ENCODE measurements at regions of chr2 and their contacts with region 1.

Region 1: DNA sequence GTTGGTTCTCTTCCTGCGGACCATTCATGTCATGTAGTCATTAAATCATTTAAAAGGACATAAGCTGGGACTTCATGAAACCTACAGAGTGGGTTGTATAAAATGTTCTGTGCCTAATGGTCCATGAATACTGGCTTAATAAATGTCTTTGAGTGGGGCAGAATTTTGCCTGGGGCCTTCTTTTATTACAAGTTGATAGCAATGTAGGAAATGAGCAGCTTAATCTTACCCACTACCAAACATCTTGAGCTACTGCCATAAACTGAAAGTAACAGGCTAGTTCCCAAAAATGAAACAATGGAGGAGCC is 130.9 kb downstream of the TMEM17 start:
- DNase-seq: no peak
- ATAC-seq: no peak

Region 2: DNA sequence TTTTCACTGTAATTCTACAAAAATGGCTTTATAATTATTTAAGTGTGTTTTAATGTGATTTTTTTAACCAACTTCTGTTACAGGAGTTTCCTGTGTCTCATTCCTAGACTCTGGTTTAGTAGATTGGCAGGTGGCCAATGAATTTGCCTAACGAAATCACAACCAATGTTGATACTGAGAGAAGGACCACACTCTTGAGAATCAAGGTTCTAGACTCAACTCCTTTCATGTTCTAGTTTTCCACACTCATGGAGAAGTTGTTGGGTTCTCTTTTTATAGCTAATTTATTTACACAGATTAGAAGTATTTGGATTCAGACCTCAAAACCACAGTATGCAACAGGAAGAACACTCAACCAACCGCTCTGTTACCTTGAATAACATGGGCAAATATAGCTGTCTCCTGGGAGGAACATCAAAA is 881.5 kb before region 1 on chr2:
- intact Hi-C with region 1: loop called (anchors 5 kb)
- DNase-seq: no peak
- ATAC-seq: no peak